Vagina (tissue), 2 donors: ENCODE measurements at regions of chr1 and their contacts with region 1.

Region 1: DNA sequence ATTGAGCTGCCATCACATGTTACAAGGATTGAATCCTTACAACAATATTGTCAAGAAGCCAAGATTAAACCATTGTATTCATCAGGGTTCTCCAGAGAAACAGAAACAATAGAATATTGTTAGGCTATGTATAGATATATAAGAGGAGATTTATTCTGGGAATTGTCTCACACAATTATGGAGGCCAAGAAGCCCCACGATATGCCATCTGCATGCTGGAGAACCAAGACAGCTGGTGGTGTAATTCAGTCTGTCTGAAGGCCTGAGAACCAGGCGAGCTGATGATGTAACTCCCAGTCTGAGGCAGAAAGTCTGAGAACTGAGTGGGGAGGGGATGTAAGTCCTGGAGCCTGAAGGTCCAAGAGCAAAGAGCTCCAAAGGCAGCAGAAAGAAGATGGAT is 14.5 kb upstream of the TTF2 start:
- DNase-seq: no peak
- H3K4me3 ChIP-seq: no peak overlapping the region
- H3K27ac ChIP-seq: no peak overlapping the region
- H3K4me1 ChIP-seq: no peaks in the 10 kb centered on the region
- H3K27me3 ChIP-seq: no peaks in the 10 kb centered on the region
- CTCF ChIP-seq: no peak
- POLR2A ChIP-seq: no peak

Region 2: GRCh38 chr1:116740746-116741145 is 304.9 kb before region 1 on chr1:
- intact Hi-C with region 1: loop called (anchors 10 kb)
- DNase-seq: no peak
- H3K4me3 ChIP-seq: no peak overlapping the region
- H3K27ac ChIP-seq: no peak overlapping the region
- H3K4me1 ChIP-seq: no peaks in the 10 kb centered on the region
- H3K27me3 ChIP-seq: no peaks in the 10 kb centered on the region
- CTCF ChIP-seq: no peak
- POLR2A ChIP-seq: no peak

Region 3: GRCh38 chr1:116853670-116854402 is 191.8 kb before region 1 on chr1:
- intact Hi-C with region 1: loop called (anchors 10 kb)
- DNase-seq: no peak
- H3K4me3 ChIP-seq: no peak overlapping the region
- H3K27ac ChIP-seq: no peak overlapping the region
- H3K4me1 ChIP-seq: peaks cover 21% of the 10 kb centered on the region
- H3K27me3 ChIP-seq: no peaks in the 10 kb centered on the region
- CTCF ChIP-seq: no peak
- POLR2A ChIP-seq: no peak